GM12878 (cell line): ENCODE measurements at regions of chr7 and their contacts with region 1.

Region 1: GRCh38 chr7:97104719-97105238 is 12.7 kb upstream of the SDHAF3 start:
- DNase-seq: no peak
- ATAC-seq: peak; percentile 99
- H3K4me3 ChIP-seq: no peak overlapping the region
- H3K27ac ChIP-seq: no peak overlapping the region
- H3K4me1 ChIP-seq: no peaks in the 10 kb centered on the region
- H3K27me3 ChIP-seq: no peaks in the 10 kb centered on the region; a peak in 1 of 4 replicates
- CTCF ChIP-seq: peak; percentile 69 to 92 (median 71); a peak in 5 of 6 replicates
- EP300 ChIP-seq: no peak
- POLR2A ChIP-seq: no peak
- RAD21 ChIP-seq: peak; percentile 84

Region 2: DNA sequence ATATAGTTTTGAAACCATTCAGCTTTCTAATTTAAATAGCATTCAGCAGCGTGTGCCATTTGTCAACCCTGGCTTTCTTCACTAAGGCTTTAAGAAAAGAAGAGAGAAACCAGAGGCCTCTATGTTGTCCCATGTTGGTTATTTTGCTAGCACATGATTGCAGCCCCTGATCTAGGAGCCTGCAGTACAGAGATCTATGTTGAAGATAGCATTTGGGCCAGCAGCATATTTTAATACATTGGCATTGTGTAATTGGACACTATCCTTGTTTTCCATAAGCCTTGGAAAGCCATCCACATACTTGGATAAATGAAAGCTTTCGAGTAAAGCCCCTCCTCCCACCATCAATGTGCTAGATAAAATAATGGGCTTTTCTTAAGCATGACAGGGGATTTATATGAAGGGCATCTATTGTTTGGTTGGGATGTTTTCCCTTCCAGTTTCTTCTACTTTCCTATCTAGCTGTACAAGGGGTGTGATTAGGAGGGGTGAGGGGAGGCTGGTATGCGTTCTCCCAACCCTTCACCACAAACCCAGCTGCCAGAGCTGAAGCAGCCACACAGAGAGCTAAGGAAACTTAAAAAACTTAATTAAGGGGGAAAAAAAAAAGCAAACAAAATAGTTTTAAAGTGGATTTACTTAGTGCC is 10.4 kb before region 1 on chr7:
- CTCF ChIA-PET with region 1: interaction called, 22 read pairs
- POLR2A ChIA-PET with region 1: no interaction called
- RAD21 ChIA-PET with region 1: interaction called, 5 read pairs
- SMC1A ChIA-PET with region 1: interaction called, 8 read pairs
- in situ Hi-C with region 1: no loop called
- intact Hi-C with region 1: no loop called
- DNase-seq: no peak
- ATAC-seq: no peak
- H3K4me3 ChIP-seq: no peak overlapping the region
- H3K27ac ChIP-seq: no peak overlapping the region
- H3K4me1 ChIP-seq: no peaks in the 10 kb centered on the region
- H3K27me3 ChIP-seq: no peaks in the 10 kb centered on the region
- CTCF ChIP-seq: no peak
- EP300 ChIP-seq: no peak
- POLR2A ChIP-seq: no peak
- RAD21 ChIP-seq: no peak

Region 3: GRCh38 chr7:97179454-97180104 is 74.8 kb after region 1 on chr7:
- CTCF ChIA-PET with region 1: interaction called, 20 read pairs
- POLR2A ChIA-PET with region 1: interaction called, 3 read pairs
- RAD21 ChIA-PET with region 1: interaction called, 8 read pairs
- SMC1A ChIA-PET with region 1: interaction called, 19 read pairs
- in situ Hi-C with region 1: loop called (anchors 5 kb)
- intact Hi-C with region 1: loop called (anchors 1 kb)
- DNase-seq: peak; percentile 8
- ATAC-seq: peak; percentile 89
- H3K4me3 ChIP-seq: no peak overlapping the region
- H3K27ac ChIP-seq: no peak overlapping the region
- H3K4me1 ChIP-seq: no peaks in the 10 kb centered on the region
- H3K27me3 ChIP-seq: no peaks in the 10 kb centered on the region
- CTCF ChIP-seq: peak; percentile 62 to 84 (median 71)
- EP300 ChIP-seq: no peak
- POLR2A ChIP-seq: no peak
- RAD21 ChIP-seq: peak; percentile 68

Region 4: DNA sequence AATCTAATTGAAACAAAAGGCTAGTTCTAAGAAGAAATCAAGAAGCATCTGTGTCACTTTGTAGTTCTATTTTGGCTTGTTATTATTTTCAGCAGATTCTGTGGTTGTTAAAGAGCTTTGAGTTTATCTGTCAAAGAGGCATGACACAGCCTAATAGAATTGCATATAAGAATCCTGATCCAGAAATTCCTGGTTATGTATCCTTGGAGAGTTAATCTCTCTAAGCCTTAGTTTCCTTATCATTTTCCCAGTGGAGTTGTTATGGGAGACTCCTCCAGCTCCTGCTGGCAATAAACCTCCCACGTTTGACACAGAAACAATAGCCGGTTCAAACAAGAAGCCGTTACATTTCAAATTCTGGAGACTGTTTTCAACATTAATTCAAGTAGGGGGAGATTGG is 301.1 kb after region 1 on chr7:
- CTCF ChIA-PET with region 1: no interaction called
- POLR2A ChIA-PET with region 1: no interaction called
- RAD21 ChIA-PET with region 1: no interaction called
- SMC1A ChIA-PET with region 1: no interaction called
- in situ Hi-C with region 1: no loop called
- intact Hi-C with region 1: no loop called
- DNase-seq: no peak
- ATAC-seq: no peak
- H3K4me3 ChIP-seq: no peak overlapping the region
- H3K27ac ChIP-seq: no peak overlapping the region
- H3K4me1 ChIP-seq: no peaks in the 10 kb centered on the region
- H3K27me3 ChIP-seq: no peaks in the 10 kb centered on the region
- CTCF ChIP-seq: no peak
- EP300 ChIP-seq: no peak
- POLR2A ChIP-seq: no peak
- RAD21 ChIP-seq: no peak

Region 5: GRCh38 chr7:97513326-97513725 is 408.5 kb after region 1 on chr7:
- CTCF ChIA-PET with region 1: no interaction called
- POLR2A ChIA-PET with region 1: no interaction called
- RAD21 ChIA-PET with region 1: no interaction called
- SMC1A ChIA-PET with region 1: no interaction called
- in situ Hi-C with region 1: no loop called
- intact Hi-C with region 1: no loop called
- DNase-seq: no peak
- ATAC-seq: peak; percentile 90
- H3K4me3 ChIP-seq: no peak overlapping the region
- H3K27ac ChIP-seq: no peak overlapping the region
- H3K4me1 ChIP-seq: no peaks in the 10 kb centered on the region
- H3K27me3 ChIP-seq: no peaks in the 10 kb centered on the region; a peak in 1 of 4 replicates
- CTCF ChIP-seq: no peak
- EP300 ChIP-seq: no peak
- POLR2A ChIP-seq: no peak
- RAD21 ChIP-seq: no peak

Region 6: GRCh38 chr7:97835296-97836138 is 730.7 kb after region 1 on chr7:
- CTCF ChIA-PET with region 1: interaction called, 26 read pairs
- POLR2A ChIA-PET with region 1: no interaction called
- RAD21 ChIA-PET with region 1: interaction called, 7 read pairs
- SMC1A ChIA-PET with region 1: interaction called, 16 read pairs
- in situ Hi-C with region 1: loop called (anchors 5 kb)
- intact Hi-C with region 1: loop called (anchors 1 kb)
- DNase-seq: peak; percentile 9
- ATAC-seq: peak; percentile 97
- H3K4me3 ChIP-seq: no peak overlapping the region
- H3K27ac ChIP-seq: no peak overlapping the region
- H3K4me1 ChIP-seq: no peaks in the 10 kb centered on the region
- H3K27me3 ChIP-seq: no peaks in the 10 kb centered on the region
- CTCF ChIP-seq: peak; percentile 29 to 68 (median 63); a peak in 5 of 6 replicates
- EP300 ChIP-seq: no peak
- POLR2A ChIP-seq: no peak
- RAD21 ChIP-seq: peak; percentile 80